WTC11 (cell line): ENCODE measurements at regions of chr13 and their contacts with region 1.

Region 1: DNA sequence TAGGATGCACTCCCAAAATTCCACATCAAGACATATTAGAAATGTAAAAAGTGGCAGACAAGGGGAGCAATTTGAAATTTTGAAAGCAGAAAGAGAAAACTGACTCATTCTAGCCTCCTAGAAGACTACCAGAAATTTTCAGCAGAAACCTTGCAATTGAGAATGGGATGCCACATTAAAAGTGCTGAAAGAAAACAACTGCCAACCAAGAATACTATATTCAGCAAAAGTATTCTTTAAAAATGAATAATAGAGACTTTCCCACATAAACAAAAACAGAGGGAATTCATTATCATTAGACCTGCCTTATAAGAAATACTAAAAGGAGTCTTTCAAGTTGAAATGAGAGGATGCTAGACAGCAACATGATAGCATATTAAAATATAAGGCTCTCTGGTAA is 78.3 kb upstream of the HTR2A start:
- DNase-seq: no peak
- ATAC-seq: no peak
- H3K4me3 Mint-ChIP-seq: no peak overlapping the region
- H3K27ac Mint-ChIP-seq: no peak overlapping the region
- H3K4me1 Mint-ChIP-seq: no peaks in the 10 kb centered on the region
- H3K27me3 Mint-ChIP-seq: no peaks in the 10 kb centered on the region; the same call in 1 of the 2 replicates
- CTCF ChIP-seq: no peak

Region 2: GRCh38 chr13:46961719-46962118 is 13.5 kb before region 1 on chr13:
- CTCF ChIA-PET with region 1: interaction called, 30 read pairs
- POLR2A ChIA-PET with region 1: no interaction called
- DNase-seq: no peak
- ATAC-seq: no peak
- H3K4me3 Mint-ChIP-seq: no peak overlapping the region
- H3K27ac Mint-ChIP-seq: no peak overlapping the region
- H3K4me1 Mint-ChIP-seq: no peaks in the 10 kb centered on the region
- H3K27me3 Mint-ChIP-seq: no peaks in the 10 kb centered on the region
- CTCF ChIP-seq: no peak

Region 3: GRCh38 chr13:47459512-47459911 is 484.3 kb after region 1 on chr13:
- CTCF ChIA-PET with region 1: interaction called, 13 read pairs
- POLR2A ChIA-PET with region 1: no interaction called
- DNase-seq: no peak
- ATAC-seq: peak; percentile 42
- H3K4me3 Mint-ChIP-seq: no peak overlapping the region
- H3K27ac Mint-ChIP-seq: no peak overlapping the region
- H3K4me1 Mint-ChIP-seq: peaks cover 31% of the 10 kb centered on the region
- H3K27me3 Mint-ChIP-seq: no peaks in the 10 kb centered on the region
- CTCF ChIP-seq: no peak